ENCODE measurements at regions of chr3 and their contacts with region 1.

Region 1: DNA sequence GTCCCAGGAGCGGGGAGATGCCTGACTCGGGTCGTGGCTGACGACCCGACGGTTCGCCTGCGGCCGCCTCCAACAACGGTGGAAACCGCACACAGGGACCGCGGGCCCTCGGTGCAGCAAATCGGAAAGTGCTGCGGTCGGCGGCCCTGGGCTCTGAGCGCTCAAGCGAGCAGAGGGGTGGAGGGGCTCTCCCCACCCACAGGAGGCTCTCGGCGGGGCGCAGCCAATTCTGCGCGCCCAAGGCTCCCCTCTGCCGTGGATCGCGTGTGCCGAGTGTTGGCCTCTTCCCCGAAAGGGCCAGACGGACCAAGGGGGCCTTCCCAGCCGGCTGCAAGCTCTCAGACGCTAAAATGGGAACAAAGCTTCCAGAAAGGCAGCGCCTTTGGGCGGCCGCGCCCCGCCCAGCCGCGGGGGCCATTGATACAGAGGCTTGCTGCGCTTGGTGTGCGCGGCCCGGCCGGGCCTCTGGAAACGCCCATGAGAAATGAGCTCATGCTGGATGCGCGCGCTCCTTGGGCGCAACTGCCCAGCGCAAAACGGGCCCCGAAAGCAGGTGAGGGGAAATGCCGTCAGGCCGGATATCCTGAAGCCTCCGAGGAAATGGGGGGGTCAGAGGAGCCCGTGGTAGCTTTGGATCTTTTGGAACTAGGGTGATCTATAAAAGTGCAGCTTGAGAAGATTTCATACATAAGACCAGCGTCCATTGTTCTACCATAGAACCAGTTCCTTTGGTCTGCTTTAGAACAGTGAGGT is 1.2 kb upstream of the GSK3B start:
- DNase-seq: peak; percentile 87
- ATAC-seq: peak; percentile 78
- H3K4me3 ChIP-seq: peak overlapping the region; percentile 82 to 88 (median 88)
- H3K27ac ChIP-seq: peak overlapping the region; percentile 100
- H3K4me1 ChIP-seq: peaks cover 15% of the 10 kb centered on the region
- H3K27me3 ChIP-seq: no peaks in the 10 kb centered on the region; a peak in 1 of 5 replicates
- CTCF ChIP-seq: no peak; the same call in none of the 2 replicates
- EP300 ChIP-seq: no peak
- POLR2A ChIP-seq: peak; percentile 95 to 98
- RAD21 ChIP-seq: peak; percentile 65

Region 2: GRCh38 chr3:119463171-119464169 is 631.9 kb before region 1 on chr3 and contains the start of gene TMEM39A:
- CTCF ChIA-PET with region 1: no interaction called
- POLR2A ChIA-PET with region 1: interaction called, 11 read pairs
- in situ Hi-C with region 1: no loop called
- intact Hi-C with region 1: no loop called
- DNase-seq: peak; percentile 97
- ATAC-seq: peak; percentile 98
- H3K4me3 ChIP-seq: peak within 1 kb of the TSS; percentile 89 to 97 (median 93)
- H3K27ac ChIP-seq: peak within 1 kb of the TSS; percentile 90
- H3K4me1 ChIP-seq: peaks cover 42% of the 10 kb centered on the region
- H3K27me3 ChIP-seq: no peaks in the 10 kb centered on the region; a peak in 1 of 5 replicates
- CTCF ChIP-seq: no peak
- EP300 ChIP-seq: no peak
- POLR2A ChIP-seq: peak; percentile 98 to 99
- RAD21 ChIP-seq: no peak; the same call in 1 of the 2 replicates
- total RNA-seq, gene TMEM39A: 32.9 and 55.8 TPM in 2 replicates

Region 3: DNA sequence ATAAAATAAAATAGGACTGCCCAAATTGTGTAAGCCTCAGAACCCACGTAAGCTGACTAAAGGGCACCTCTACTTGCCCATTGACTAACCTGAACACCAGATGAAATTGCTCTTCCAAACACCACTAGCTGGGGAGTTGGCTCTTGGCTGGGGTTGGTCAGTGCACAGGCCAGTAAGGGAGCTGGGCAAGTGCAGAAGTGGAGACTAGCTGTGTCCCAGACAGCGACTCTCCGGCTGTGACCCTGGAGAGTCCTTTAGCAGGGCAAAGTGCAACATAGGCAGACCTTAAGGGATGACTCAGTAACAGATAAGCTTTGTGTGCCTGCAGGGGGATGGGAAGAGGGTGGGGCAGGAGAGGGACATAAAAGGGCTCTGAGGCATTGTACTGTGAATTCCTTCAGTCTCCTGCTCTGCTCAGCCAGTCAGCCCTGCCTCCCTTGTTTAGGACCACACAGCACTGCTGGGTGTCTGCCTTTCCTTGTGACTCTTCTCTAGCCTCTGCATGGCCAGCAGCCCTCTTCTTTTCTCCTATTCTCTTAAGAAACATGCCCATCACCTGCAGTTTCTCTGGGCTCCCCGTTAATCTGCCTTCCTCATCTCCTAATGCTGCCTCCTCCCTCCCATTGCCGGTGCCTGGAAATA is 300.3 kb before region 1 on chr3:
- CTCF ChIA-PET with region 1: no interaction called
- POLR2A ChIA-PET with region 1: interaction called, 18 read pairs
- in situ Hi-C with region 1: no loop called
- intact Hi-C with region 1: no loop called
- DNase-seq: peak; percentile 98
- ATAC-seq: peak; percentile 96
- H3K4me3 ChIP-seq: peak overlapping the region; percentile 31 to 43 (median 33); a peak in 5 of 6 replicates
- H3K27ac ChIP-seq: peak overlapping the region; percentile 90
- H3K4me1 ChIP-seq: peaks cover 53% of the 10 kb centered on the region
- H3K27me3 ChIP-seq: no peaks in the 10 kb centered on the region
- CTCF ChIP-seq: 0 out of 2 replicates have a peak, but pooled peaks have one; percentile 19
- EP300 ChIP-seq: peak; percentile 63 to 94; a peak in 2 of 4 replicates
- POLR2A ChIP-seq: peak; percentile 72 to 80
- RAD21 ChIP-seq: no peak

Region 4: GRCh38 chr3:119902061-119902460 is 193.3 kb before region 1 on chr3:
- CTCF ChIA-PET with region 1: no interaction called
- POLR2A ChIA-PET with region 1: no interaction called
- in situ Hi-C with region 1: no loop called
- intact Hi-C with region 1: no loop called
- DNase-seq: no peak
- ATAC-seq: no peak
- H3K4me3 ChIP-seq: no peak overlapping the region
- H3K27ac ChIP-seq: no peak overlapping the region
- H3K4me1 ChIP-seq: no peaks in the 10 kb centered on the region
- H3K27me3 ChIP-seq: no peaks in the 10 kb centered on the region
- CTCF ChIP-seq: no peak
- EP300 ChIP-seq: no peak
- POLR2A ChIP-seq: no peak
- RAD21 ChIP-seq: no peak

Region 5: DNA sequence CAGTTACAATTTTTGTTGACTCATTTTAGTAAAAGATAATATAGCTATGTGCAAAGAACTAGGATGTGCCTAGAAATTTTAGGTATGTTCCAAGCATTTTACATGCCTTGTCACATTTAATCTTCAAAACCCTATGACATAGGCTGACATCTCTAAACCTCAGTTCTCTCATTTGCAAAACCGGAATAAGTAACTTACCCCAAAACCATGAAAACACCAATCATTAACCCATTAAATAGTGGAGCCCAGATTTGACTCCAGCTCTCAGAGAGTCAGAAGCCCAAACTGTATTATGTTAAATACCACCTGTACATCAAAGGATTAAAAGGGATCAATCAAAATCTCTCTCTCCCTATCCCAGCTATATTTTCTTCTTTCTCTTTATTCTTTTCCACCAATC is 37.8 kb before region 1 on chr3:
- CTCF ChIA-PET with region 1: no interaction called
- POLR2A ChIA-PET with region 1: no interaction called
- in situ Hi-C with region 1: no loop called
- intact Hi-C with region 1: loop called (anchors 1 kb)
- DNase-seq: no peak
- ATAC-seq: no peak
- H3K4me3 ChIP-seq: no peak overlapping the region
- H3K27ac ChIP-seq: no peak overlapping the region
- H3K4me1 ChIP-seq: peaks cover 16% of the 10 kb centered on the region
- H3K27me3 ChIP-seq: no peaks in the 10 kb centered on the region
- CTCF ChIP-seq: no peak
- EP300 ChIP-seq: no peak
- POLR2A ChIP-seq: no peak
- RAD21 ChIP-seq: no peak

Region 6: DNA sequence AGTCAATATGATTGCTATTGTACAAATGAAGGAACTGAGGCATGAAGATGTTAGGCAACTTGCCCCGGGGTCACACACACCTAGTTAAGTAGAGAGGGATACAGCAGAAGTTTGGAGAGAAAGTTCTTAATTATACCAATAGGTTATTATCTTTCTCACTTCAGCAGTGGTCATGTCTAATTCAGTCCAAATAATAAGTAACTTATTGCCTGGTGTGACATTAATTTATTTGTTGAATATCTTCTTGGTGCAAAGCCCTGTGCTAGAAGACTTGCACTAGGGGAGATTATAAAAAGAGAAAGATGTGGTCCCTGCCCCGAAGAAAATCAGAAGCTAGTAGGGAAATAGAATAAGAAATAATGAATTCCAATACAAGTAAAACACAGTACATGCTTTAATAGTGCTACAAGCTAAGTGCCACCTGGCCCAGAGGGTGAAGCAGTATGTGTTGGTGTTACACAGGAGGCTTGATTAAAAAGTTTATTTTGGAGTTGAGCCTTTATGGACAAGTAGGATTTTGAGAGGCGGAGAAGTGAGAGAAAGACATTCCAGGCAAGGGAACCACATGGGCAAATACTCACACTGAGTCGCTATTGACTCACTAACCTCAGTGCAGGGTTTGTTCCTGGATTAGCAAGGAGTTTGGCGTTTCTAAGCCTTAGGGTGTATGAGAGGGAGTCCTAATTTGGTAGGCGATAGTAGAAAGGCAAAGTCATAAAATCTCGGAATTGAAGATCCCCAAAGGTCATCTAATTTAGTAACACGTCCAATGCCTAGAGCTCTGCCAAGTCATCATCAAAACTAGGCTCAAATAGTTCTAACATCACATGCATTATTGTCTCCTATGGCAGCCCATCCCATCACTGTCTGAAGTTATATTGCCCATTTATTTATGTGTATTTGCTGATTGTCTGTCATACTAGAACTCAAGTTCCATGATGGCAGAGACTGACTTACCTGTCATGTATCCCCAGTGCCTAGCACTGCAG is 18.0 kb after region 1 on chr3:
- CTCF ChIA-PET with region 1: no interaction called
- POLR2A ChIA-PET with region 1: interaction called, 14 read pairs
- in situ Hi-C with region 1: no loop called
- intact Hi-C with region 1: no loop called
- DNase-seq: no peak
- ATAC-seq: no peak
- H3K4me3 ChIP-seq: no peak overlapping the region
- H3K27ac ChIP-seq: no peak overlapping the region
- H3K4me1 ChIP-seq: peaks cover 22% of the 10 kb centered on the region
- H3K27me3 ChIP-seq: no peaks in the 10 kb centered on the region
- CTCF ChIP-seq: no peak
- EP300 ChIP-seq: no peak
- POLR2A ChIP-seq: no peak
- RAD21 ChIP-seq: no peak

Region 7: DNA sequence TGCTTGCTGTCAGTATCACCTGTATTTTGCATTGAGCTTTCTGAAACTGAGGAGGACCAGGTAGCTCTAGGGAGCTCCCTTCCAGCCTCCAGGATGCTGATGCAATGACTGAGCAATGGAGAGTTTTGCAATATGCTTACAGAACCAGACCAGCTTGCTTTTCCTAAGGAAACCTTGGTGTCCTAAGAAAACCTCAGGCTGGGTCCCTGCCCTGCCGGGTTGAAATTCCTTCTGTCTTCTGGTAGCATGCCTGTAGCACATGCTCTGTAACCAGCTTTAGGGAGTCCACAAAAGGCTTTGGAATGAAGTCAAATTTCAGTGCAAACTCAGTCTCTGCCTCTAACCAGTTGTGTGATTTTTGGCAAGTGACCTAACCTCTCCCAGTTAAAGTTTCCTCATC is 64.6 kb after region 1 on chr3:
- CTCF ChIA-PET with region 1: no interaction called
- POLR2A ChIA-PET with region 1: interaction called, 15 read pairs
- in situ Hi-C with region 1: no loop called
- intact Hi-C with region 1: no loop called
- DNase-seq: no peak
- ATAC-seq: peak; percentile 52
- H3K4me3 ChIP-seq: no peak overlapping the region
- H3K27ac ChIP-seq: no peak overlapping the region
- H3K4me1 ChIP-seq: peaks cover 46% of the 10 kb centered on the region
- H3K27me3 ChIP-seq: no peaks in the 10 kb centered on the region
- CTCF ChIP-seq: no peak
- EP300 ChIP-seq: peak in 1 of 2 experiments; percentile 58; a peak in 2 of 4 replicates
- POLR2A ChIP-seq: no peak
- RAD21 ChIP-seq: no peak

Region 8: DNA sequence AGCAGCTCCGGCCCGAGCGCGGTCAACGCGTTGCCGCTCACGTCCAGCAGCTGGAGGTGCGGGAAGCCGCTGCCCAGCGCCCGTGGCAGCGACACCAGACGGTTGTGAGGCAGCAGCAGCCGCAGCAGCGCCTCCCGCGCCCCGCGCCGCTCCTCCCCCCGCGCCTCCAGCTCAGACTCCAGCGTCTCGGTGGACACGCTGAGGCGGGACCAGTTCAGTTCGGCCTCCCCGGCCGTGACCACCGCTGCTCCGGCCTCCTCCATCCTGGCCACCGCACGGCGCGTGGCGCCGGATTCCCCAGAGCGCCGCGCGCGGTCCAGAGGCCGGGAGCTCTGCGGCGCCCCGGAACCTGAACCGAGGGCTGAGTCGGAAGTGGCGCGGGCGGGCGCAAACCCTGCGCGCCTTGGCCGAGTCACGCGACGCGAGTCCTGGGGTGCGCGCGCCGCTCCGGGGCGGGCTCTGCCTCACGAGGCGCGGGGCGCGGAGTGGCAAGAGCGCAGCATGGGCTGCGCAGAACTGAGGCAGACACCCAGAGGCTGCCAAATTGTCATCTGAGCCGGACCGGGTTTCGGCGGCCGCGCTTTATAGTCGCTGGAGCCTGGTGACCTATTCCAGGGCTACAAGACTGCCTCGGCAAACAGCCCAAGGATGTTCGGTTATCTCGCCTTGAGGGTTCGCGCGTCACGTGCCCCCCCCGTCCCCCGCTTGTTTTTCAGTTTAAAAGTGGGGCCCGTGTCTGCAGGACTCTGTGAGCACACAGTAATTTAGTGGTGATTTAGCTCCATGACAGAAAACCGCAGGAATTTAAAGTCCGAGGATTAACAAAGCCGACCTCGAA is 253.8 kb after region 1 on chr3 and contains the start of gene LRRC58:
- CTCF ChIA-PET with region 1: no interaction called
- POLR2A ChIA-PET with region 1: interaction called, 22 read pairs
- in situ Hi-C with region 1: no loop called
- intact Hi-C with region 1: loop called (anchors 10 kb)
- DNase-seq: peak; percentile 81
- ATAC-seq: peak; percentile 91
- H3K4me3 ChIP-seq: peak within 1 kb of the TSS; percentile 68 to 95 (median 87)
- H3K27ac ChIP-seq: peak within 1 kb of the TSS; percentile 81
- H3K4me1 ChIP-seq: peaks cover 45% of the 10 kb centered on the region
- H3K27me3 ChIP-seq: peaks cover 0 to 7% of the 10 kb centered on the region in 2 experiments; a peak in 2 of 5 replicates
- CTCF ChIP-seq: peak; percentile 66
- EP300 ChIP-seq: no peak
- POLR2A ChIP-seq: peak; percentile 74 to 80; a peak in 3 of 4 replicates
- RAD21 ChIP-seq: peak; percentile 54; the same call in 1 of the 2 replicates
- total RNA-seq, gene LRRC58: 17.3 and 28.8 TPM in 2 replicates

Region 9: GRCh38 chr3:120450600-120451271 is 355.3 kb after region 1 on chr3 and contains the start of gene FSTL1:
- CTCF ChIA-PET with region 1: no interaction called
- POLR2A ChIA-PET with region 1: no interaction called
- in situ Hi-C with region 1: no loop called
- intact Hi-C with region 1: no loop called
- DNase-seq: no peak
- ATAC-seq: peak; percentile 74
- H3K4me3 ChIP-seq: peak within 1 kb of the TSS; percentile 9 to 62 (median 15); a peak in 4 of 6 replicates
- H3K27ac ChIP-seq: no peak within 1 kb of the TSS
- H3K4me1 ChIP-seq: 0 out of 2 replicates have a peak, but pooled peaks cover 7% of the 10 kb centered on the region
- H3K27me3 ChIP-seq: peaks cover 3 to 47% of the 10 kb centered on the region in 2 experiments; a peak in 4 of 5 replicates
- CTCF ChIP-seq: no peak
- EP300 ChIP-seq: no peak
- POLR2A ChIP-seq: no peak
- RAD21 ChIP-seq: no peak
- total RNA-seq, gene FSTL1: 0.07 and 0.17 TPM in 2 replicates

Measured in HepG2 (cell line).